ENCODE measurements at regions of chr14 and their contacts with region 1.

Region 1: GRCh38 chr14:74945823-74946682 is 9.3 kb downstream of the PGF start:
- DNase-seq: peak; percentile 41 to 95
- H3K4me3 ChIP-seq: no peak overlapping the region
- H3K27ac ChIP-seq: no peak overlapping the region
- H3K4me1 ChIP-seq: peaks cover 0 to 6% (median 2%) of the 10 kb centered on the region in 4 experiments; a peak in 3 of 7 replicates
- H3K27me3 ChIP-seq: no peaks in the 10 kb centered on the region
- CTCF ChIP-seq: peak in 2 of 3 experiments; percentile 93 to 97; a peak in 3 of 4 replicates
- EP300 ChIP-seq: no peak
- POLR2A ChIP-seq: 0 out of 3 replicates have a peak, but pooled peaks of 1 of the 2 experiments have one; percentile 54
- RAD21 ChIP-seq: peak; percentile 85 to 91

Region 2: DNA sequence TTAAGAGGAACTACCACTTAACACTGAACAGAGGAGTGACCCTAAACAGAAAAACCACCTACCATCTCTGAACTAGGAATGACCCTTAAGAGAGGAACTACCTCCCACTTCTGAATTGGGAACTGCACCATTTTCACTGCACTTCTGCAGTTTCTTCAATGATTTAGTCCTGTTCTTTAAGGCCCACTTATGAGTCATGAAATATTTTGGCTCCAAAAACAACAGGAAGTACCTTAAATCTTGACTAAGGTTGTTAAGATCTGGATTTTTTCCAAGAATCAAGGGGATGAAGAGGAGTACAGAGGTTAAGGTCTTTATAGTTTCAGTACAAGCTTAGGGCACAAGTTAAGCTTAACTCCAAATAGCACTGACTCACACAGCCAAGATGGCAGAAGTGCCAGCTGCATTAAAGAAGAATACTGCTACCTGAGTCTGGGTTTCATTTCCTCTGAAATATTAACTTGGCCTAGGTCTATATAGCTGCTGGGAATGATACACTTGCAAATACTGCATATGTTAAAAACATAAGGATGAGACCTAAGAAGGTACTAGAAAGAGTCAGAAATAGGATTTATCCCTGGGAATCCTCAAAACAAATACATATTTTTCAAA is 457.2 kb before region 1 on chr14:
- CTCF ChIA-PET with region 1: no interaction called
- POLR2A ChIA-PET with region 1: no interaction called
- DNase-seq: no peak
- H3K4me3 ChIP-seq: no peak overlapping the region
- H3K27ac ChIP-seq: no peak overlapping the region
- H3K4me1 ChIP-seq: peaks cover 0 to 2% (median 2%) of the 10 kb centered on the region in 4 experiments; a peak in 4 of 7 replicates
- H3K27me3 ChIP-seq: no peaks in the 10 kb centered on the region
- CTCF ChIP-seq: no peak
- EP300 ChIP-seq: no peak
- POLR2A ChIP-seq: no peak
- RAD21 ChIP-seq: no peak

Region 3: DNA sequence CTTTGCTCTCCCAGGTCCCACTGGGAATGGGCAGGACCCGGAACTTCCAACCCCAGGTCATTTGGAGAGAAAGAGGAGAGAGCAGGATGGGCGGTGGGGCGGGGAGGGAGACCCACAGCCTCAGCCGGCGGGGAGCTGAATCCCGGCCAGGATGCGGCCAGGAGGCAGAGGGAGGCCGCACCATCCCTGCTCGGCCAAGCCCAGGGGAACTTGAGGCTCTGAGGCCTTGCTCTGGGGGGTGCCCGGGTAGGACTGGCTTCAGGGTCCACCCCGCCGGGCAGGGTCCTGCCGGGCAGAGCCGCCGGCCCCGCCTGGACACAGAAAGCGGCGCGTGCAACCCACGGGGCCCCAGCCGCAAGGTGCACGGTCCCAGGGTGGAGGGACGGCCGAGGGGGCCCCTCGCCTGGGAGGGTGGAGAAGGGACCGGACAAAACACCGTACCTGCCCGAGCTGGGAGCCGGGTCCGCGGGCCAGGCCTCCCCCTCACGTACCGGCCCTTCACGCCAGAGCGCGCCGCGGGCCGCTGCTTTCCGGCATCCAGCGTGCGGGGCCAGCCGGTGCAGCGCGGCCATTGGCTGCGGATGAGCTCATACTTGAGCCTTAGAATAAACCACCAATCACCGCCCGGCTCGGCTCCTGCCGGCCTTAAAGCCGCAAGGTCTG is 23.2 kb before region 1 on chr14 and contains the start of gene RPS6KL1:
- CTCF ChIA-PET with region 1: interaction called, 19 read pairs
- POLR2A ChIA-PET with region 1: interaction called, 6 read pairs
- DNase-seq: peak; percentile 50 to 86
- H3K4me3 ChIP-seq: peak within 1 kb of the TSS; percentile 49 to 78 (median 68)
- H3K27ac ChIP-seq: no peak within 1 kb of the TSS
- H3K4me1 ChIP-seq: no peaks in the 10 kb centered on the region
- H3K27me3 ChIP-seq: 0 out of 7 replicates have a peak, but pooled peaks cover 0 to 2% (median 0%) of the 10 kb centered on the region in 4 experiments
- CTCF ChIP-seq: no peak
- EP300 ChIP-seq: no peak
- POLR2A ChIP-seq: peak in 1 of 2 experiments; percentile 80; a peak in 2 of 3 replicates
- RAD21 ChIP-seq: no peak
- total RNA-seq, gene RPS6KL1: 11.3 and 13.8 TPM in 2 replicates

Region 4: DNA sequence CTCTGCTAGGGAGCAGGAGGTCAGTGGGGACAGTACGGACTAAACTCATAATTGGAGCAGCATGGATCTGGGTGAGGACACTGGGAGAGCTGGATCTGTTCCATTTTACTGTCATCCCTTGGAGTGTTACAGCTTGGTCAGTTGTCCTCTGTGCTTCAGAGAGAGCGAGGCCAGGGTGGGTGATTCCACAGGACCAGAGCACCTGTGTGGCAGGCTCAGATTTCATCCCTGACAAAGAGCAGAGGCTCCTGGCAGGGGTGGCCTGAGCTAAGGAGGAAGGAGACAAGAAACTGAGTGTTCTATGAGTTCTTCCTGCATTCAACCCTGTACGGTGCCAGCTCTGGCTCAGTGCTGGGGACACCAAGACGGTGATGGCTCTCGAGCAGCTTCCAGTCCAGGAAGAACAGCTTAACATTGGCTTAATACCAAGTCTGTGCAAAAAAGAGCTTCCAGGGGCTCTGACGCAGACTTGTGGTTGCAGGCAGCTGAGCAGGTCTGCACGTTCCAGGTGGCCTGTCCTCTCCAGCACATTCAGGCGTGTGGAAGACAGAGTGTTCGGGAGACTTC is 17.7 kb after region 1 on chr14:
- CTCF ChIA-PET with region 1: interaction called, 146 read pairs
- POLR2A ChIA-PET with region 1: interaction called, 4 read pairs
- DNase-seq: no peak
- H3K4me3 ChIP-seq: no peak overlapping the region
- H3K27ac ChIP-seq: no peak overlapping the region
- H3K4me1 ChIP-seq: peaks cover 0 to 6% (median 0%) of the 10 kb centered on the region in 4 experiments; a peak in 3 of 7 replicates
- H3K27me3 ChIP-seq: no peaks in the 10 kb centered on the region
- CTCF ChIP-seq: no peak
- EP300 ChIP-seq: no peak
- POLR2A ChIP-seq: no peak
- RAD21 ChIP-seq: no peak

Region 5: DNA sequence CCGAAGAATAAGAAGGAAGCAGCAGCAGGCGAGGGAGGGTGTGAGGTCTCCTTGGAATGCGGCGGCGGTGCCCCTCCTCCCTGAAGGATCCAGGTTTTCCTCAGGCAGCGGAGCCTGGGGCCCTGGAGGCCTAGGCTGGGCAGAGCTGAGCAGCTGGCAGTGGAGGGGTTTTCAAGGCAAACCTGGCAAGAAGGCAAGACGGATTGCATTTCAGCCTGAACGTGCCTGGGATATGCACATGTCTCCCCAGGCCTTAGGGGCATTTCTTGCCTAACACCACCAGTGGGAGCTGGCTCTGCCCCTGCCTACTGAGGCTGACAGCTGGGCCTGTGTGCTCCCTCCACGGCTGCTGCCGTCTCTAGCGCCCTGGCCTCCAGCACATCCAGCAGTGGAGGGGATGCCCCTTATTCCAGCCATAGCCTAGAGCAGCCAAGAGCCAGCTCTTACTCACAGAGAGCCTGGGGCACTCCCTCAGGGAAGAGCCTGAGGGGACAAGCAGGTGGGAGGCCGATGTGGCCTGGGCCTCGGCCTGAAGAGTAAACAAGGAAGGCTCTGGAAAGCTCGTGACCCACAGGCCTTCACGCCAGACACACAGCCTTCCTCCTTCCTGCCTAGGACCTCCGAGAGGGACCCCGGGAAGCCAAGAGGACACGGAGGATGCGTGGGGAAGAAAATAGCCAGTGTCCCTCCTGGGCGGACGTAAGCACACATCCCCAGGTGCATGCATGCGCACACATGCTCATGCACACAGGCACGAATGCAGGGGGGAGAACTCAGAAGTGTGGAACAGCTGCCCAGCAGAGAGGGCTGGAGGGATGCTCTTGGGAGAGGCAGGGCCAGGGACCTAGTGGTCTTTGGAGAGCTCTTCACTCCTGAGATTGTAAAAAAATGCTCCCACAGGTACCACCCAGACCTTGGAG is 33.6 kb after region 1 on chr14:
- CTCF ChIA-PET with region 1: interaction called, 30 read pairs
- POLR2A ChIA-PET with region 1: interaction called, 3 read pairs
- DNase-seq: peak in 1 of 2 experiments; percentile 66
- H3K4me3 ChIP-seq: no peak overlapping the region
- H3K27ac ChIP-seq: no peak overlapping the region
- H3K4me1 ChIP-seq: peaks cover 0 to 28% (median 23%) of the 10 kb centered on the region in 4 experiments; a peak in 6 of 7 replicates
- H3K27me3 ChIP-seq: peaks cover 0 to 2% (median 1%) of the 10 kb centered on the region in 4 experiments; a peak in 1 of 7 replicates
- CTCF ChIP-seq: peak in 2 of 3 experiments; percentile 5 to 44; a peak in 1 of 4 replicates
- EP300 ChIP-seq: no peak
- POLR2A ChIP-seq: no peak
- RAD21 ChIP-seq: peak in 1 of 2 experiments; percentile 21; a peak in 1 of 4 replicates

Region 6: DNA sequence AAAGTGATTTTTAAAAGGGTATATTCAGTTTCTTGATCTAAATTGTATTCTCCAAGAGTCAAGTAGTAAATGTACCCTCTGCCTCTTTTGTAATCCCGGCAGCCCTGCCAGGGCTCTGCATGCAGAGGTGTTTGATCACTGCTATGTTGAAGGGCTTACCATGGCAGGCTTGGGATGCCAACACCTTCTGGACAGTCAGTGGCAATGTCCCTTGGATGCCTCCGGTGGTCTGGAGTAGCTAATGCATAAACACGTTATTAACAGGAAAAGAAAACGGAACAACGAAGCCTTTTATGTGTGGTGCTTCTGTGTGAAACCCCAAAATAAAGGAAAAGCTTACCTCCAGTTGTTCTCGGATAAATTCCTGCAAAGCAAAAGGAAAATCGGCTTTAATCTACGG is 76.6 kb after region 1 on chr14:
- CTCF ChIA-PET with region 1: interaction called, 28 read pairs
- POLR2A ChIA-PET with region 1: interaction called, 4 read pairs
- DNase-seq: no peak
- H3K4me3 ChIP-seq: no peak overlapping the region
- H3K27ac ChIP-seq: no peak overlapping the region
- H3K4me1 ChIP-seq: no peaks in the 10 kb centered on the region
- H3K27me3 ChIP-seq: no peaks in the 10 kb centered on the region
- CTCF ChIP-seq: peak; percentile 61 to 66 (median 64)
- EP300 ChIP-seq: no peak
- POLR2A ChIP-seq: no peak
- RAD21 ChIP-seq: peak; percentile 63 to 72

Region 7: GRCh38 chr14:75063407-75064213 is 117.6 kb after region 1 on chr14 and contains the start of gene ACYP1:
- CTCF ChIA-PET with region 1: interaction called, 12 read pairs
- POLR2A ChIA-PET with region 1: interaction called, 3 read pairs
- DNase-seq: peak; percentile 80 to 99
- H3K4me3 ChIP-seq: peak within 1 kb of the TSS; percentile 70 to 87 (median 79)
- H3K27ac ChIP-seq: no peak within 1 kb of the TSS
- H3K4me1 ChIP-seq: no peaks in the 10 kb centered on the region; a peak in 2 of 7 replicates
- H3K27me3 ChIP-seq: no peaks in the 10 kb centered on the region
- CTCF ChIP-seq: no peak
- EP300 ChIP-seq: no peak
- POLR2A ChIP-seq: peak in 1 of 2 experiments; percentile 48; a peak in 1 of 3 replicates
- RAD21 ChIP-seq: no peak
- total RNA-seq, gene ACYP1: 17.7 and 24.8 TPM in 2 replicates

Measured in H1 (cell line).